ENCODE measurements at regions of chr2 and their contacts with region 1.

Region 1: GRCh38 chr2:172461591-172462372 is 34.4 kb downstream of the ITGA6 start:
- DNase-seq: peak; percentile 83 to 87
- H3K4me3 ChIP-seq: peak overlapping the region in 1 of 4 donors; percentile 23
- H3K27ac ChIP-seq: peak overlapping the region; percentile 42 to 90 (median 75)
- H3K4me1 ChIP-seq: peaks cover 32 to 81% (median 55%) of the 10 kb centered on the region in 4 donors
- H3K27me3 ChIP-seq: peaks cover 0 to 8% (median 0%) of the 10 kb centered on the region in 3 donors
- CTCF ChIP-seq: peak in 5 of 7 experiments; percentile 72 to 89 (median 77)
- EP300 ChIP-seq: no peak
- POLR2A ChIP-seq: no peak

Region 2: DNA sequence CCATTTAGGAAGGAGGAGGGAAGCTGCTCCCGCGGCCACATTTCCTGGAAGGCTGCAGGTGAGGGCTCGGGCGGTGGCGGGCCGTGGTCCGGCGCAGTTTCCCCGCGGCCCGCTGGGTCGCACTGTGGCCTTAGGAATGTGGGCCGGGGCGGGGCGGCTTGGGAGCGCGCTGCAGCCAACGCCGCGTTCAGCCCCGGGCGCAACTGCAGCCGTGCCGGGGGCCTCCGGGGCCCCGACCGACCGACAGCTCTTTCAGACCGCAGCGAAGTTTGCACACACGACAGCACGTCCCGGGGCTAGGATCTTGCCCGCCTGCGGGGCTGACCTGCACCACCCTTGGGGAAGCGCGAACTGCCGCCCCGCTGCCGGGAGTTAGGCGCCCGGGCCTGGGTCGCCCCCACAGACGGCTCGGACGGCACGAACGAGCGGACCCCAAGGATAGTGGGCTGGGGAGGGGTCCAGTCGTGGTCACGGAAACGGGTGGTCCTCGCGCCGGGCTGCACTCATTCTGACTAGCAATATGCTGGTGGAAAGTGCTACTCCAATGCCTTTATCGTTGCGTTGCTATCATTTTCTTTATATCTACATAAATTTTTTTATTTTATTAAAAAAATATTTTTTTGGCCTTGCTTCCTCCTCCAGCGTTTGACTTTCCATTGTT is 289.1 kb before region 1 on chr2:
- intact Hi-C with region 1: loop called (anchors 5 kb)
- DNase-seq: peak; percentile 88 to 92
- H3K4me3 ChIP-seq: peak overlapping the region; percentile 49 to 65 (median 55)
- H3K27ac ChIP-seq: peak overlapping the region; percentile 59 to 79 (median 71)
- H3K4me1 ChIP-seq: peaks cover 4 to 18% (median 9%) of the 10 kb centered on the region in 4 donors
- H3K27me3 ChIP-seq: peaks cover 0 to 18% (median 0%) of the 10 kb centered on the region in 3 donors
- CTCF ChIP-seq: peak in 5 of 7 experiments; percentile 72 to 87 (median 80)
- EP300 ChIP-seq: no peak
- POLR2A ChIP-seq: no peak